ENCODE measurements at regions of chr6 and their contacts with region 1.

Region 1: GRCh38 chr6:37222125-37222967 is 35.2 kb upstream of the TBC1D22B start:
- DNase-seq: peak; percentile 91
- CTCF ChIP-seq: no peak

Region 2: GRCh38 chr6:36765594-36766398 is 456.6 kb before region 1 on chr6:
- in situ Hi-C with region 1: loop called (anchors 25 kb)
- DNase-seq: peak; percentile 91
- CTCF ChIP-seq: peak; percentile 92